Caco-2 (cell line): ENCODE measurements at regions of chr13 and their contacts with region 1.

Region 1: GRCh38 chr13:33723772-33724435 is 94.0 kb upstream of the RFC3 start:
- DNase-seq: peak; percentile 83 to 85
- H3K4me3 ChIP-seq: no peak overlapping the region
- H3K4me3 Mint-ChIP-seq: no peak overlapping the region
- H3K27ac Mint-ChIP-seq: peak overlapping the region; percentile 59
- H3K4me1 ChIP-seq: peaks cover 10% of the 10 kb centered on the region
- H3K4me1 Mint-ChIP-seq: peaks cover 8% of the 10 kb centered on the region
- H3K27me3 ChIP-seq: no peaks in the 10 kb centered on the region
- H3K27me3 Mint-ChIP-seq: no peaks in the 10 kb centered on the region
- CTCF ChIP-seq: peak; percentile 75 to 79

Region 2: GRCh38 chr13:33441015-33441414 is 282.9 kb before region 1 on chr13:
- CTCF ChIA-PET with region 1: no interaction called
- POLR2A ChIA-PET with region 1: no interaction called
- intact Hi-C with region 1: loop called (anchors 10 kb)
- DNase-seq: peak in 1 of 2 experiments; percentile 34
- H3K4me3 ChIP-seq: no peak overlapping the region
- H3K4me3 Mint-ChIP-seq: no peak overlapping the region
- H3K27ac Mint-ChIP-seq: no peak overlapping the region
- H3K4me1 ChIP-seq: peaks cover 8% of the 10 kb centered on the region; the same call in 1 of the 2 replicates
- H3K4me1 Mint-ChIP-seq: no peaks in the 10 kb centered on the region
- H3K27me3 ChIP-seq: no peaks in the 10 kb centered on the region
- H3K27me3 Mint-ChIP-seq: no peaks in the 10 kb centered on the region
- CTCF ChIP-seq: peak; percentile 42 to 51

Region 3: DNA sequence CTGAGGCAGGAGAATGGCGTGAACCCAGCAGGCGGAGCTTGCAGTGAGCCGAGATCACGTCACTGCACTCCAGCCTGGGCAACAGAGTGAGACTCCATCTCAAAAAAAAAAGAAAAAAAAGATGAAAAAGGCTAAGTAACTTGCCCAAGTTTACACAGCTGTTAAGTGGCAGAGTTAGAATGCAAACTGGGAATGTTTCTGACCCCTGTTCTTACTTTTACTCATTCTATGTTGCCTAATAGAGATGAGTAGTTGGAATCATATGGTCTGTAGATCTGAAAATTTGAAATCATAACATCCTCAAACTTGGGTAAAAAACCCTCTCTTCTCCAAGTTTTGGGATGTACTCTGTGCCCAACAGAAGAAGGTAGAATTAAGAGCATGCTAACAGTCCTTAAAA is 141.8 kb before region 1 on chr13:
- CTCF ChIA-PET with region 1: no interaction called
- POLR2A ChIA-PET with region 1: no interaction called
- intact Hi-C with region 1: no loop called
- DNase-seq: no peak
- H3K4me3 ChIP-seq: no peak overlapping the region
- H3K4me3 Mint-ChIP-seq: no peak overlapping the region
- H3K27ac Mint-ChIP-seq: no peak overlapping the region
- H3K4me1 ChIP-seq: no peaks in the 10 kb centered on the region
- H3K4me1 Mint-ChIP-seq: no peaks in the 10 kb centered on the region
- H3K27me3 ChIP-seq: no peaks in the 10 kb centered on the region
- H3K27me3 Mint-ChIP-seq: peaks cover 3% of the 10 kb centered on the region
- CTCF ChIP-seq: no peak

Region 4: GRCh38 chr13:33606692-33607091 is 117.2 kb before region 1 on chr13:
- CTCF ChIA-PET with region 1: interaction called, 9 read pairs
- POLR2A ChIA-PET with region 1: no interaction called
- intact Hi-C with region 1: loop called (anchors 1 kb)
- DNase-seq: peak; percentile 53 to 59
- H3K4me3 ChIP-seq: no peak overlapping the region
- H3K4me3 Mint-ChIP-seq: no peak overlapping the region
- H3K27ac Mint-ChIP-seq: no peak overlapping the region
- H3K4me1 ChIP-seq: peaks cover 9% of the 10 kb centered on the region; the same call in 1 of the 2 replicates
- H3K4me1 Mint-ChIP-seq: peaks cover 5% of the 10 kb centered on the region
- H3K27me3 ChIP-seq: no peaks in the 10 kb centered on the region
- H3K27me3 Mint-ChIP-seq: no peaks in the 10 kb centered on the region
- CTCF ChIP-seq: peak; percentile 27 to 62

Region 5: DNA sequence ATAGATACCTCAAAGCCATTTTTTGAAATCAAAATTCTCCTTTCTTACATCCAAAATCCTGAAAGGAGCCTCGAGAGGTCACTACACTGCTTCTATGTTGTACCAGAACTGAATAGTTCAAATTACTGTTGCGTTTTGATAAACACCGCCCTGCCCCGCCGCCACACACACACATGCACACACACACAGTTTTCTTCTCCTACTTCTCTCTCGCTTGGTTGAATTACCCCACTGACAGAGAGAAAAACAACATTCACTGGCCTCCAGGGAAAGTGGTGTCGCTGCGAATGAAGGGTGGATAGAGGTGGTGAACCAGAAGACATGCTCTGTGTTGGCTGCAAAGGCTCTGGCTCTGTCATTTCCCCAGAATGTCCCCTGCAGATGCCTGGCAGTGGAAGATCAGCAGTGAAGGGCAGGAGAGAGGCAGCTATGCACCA is 89.3 kb before region 1 on chr13:
- CTCF ChIA-PET with region 1: interaction called, 3 read pairs
- POLR2A ChIA-PET with region 1: no interaction called
- intact Hi-C with region 1: loop called (anchors 1 kb)
- DNase-seq: peak; percentile 62 to 64
- H3K4me3 ChIP-seq: no peak overlapping the region
- H3K4me3 Mint-ChIP-seq: peak overlapping the region; percentile 57
- H3K27ac Mint-ChIP-seq: peak overlapping the region; percentile 91
- H3K4me1 ChIP-seq: peaks cover 35% of the 10 kb centered on the region
- H3K4me1 Mint-ChIP-seq: peaks cover 27% of the 10 kb centered on the region
- H3K27me3 ChIP-seq: no peaks in the 10 kb centered on the region
- H3K27me3 Mint-ChIP-seq: no peaks in the 10 kb centered on the region
- CTCF ChIP-seq: no peak